Activated CD4-positive, alpha-beta T cell treated with anti-CD3 and anti-CD28 coated beads for 36 hours (primary cell): ENCODE measurements at regions of chr2 and their contacts with region 1.

Region 1: DNA sequence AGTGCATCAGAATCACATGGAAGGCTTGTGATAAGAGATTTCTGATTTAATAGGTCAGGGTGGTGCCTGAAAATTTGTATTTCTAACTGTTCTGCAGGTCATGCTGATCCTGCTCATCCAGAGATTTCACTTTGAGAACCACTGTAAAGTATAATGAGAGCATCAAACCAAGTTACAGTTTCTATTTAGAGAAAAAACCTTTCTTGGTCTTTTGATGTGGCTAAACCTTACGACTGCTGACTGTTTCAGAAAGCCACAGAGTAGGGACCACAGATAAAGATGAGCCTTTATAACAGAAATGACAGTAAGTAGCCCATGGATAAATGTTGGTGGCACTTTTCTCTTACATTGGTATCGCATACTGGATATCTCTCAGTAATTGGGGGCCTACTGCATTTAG is 109.4 kb upstream of the FANCL start:
- DNase-seq: no peak
- ATAC-seq: peak; percentile 90
- H3K4me3 Mint-ChIP-seq: no peak overlapping the region
- H3K27ac Mint-ChIP-seq: no peak overlapping the region
- H3K4me1 Mint-ChIP-seq: peaks cover 3% of the 10 kb centered on the region
- H3K27me3 Mint-ChIP-seq: peaks cover 43% of the 10 kb centered on the region

Region 2: GRCh38 chr2:58376592-58376991 is 26.1 kb after region 1 on chr2:
- CTCF ChIA-PET with region 1: no interaction called
- POLR2A ChIA-PET with region 1: no interaction called
- intact Hi-C with region 1: loop called (anchors 1 to 2 kb)
- DNase-seq: no peak
- ATAC-seq: peak; percentile 74
- H3K4me3 Mint-ChIP-seq: no peak overlapping the region
- H3K27ac Mint-ChIP-seq: no peak overlapping the region
- H3K4me1 Mint-ChIP-seq: peaks cover 13% of the 10 kb centered on the region
- H3K27me3 Mint-ChIP-seq: peaks cover 8% of the 10 kb centered on the region

Region 3: GRCh38 chr2:58571181-58571852 is 220.8 kb after region 1 on chr2:
- CTCF ChIA-PET with region 1: no interaction called
- POLR2A ChIA-PET with region 1: no interaction called
- intact Hi-C with region 1: no loop called
- DNase-seq: peak; percentile 22
- ATAC-seq: peak; percentile 66
- H3K4me3 Mint-ChIP-seq: no peak overlapping the region
- H3K27ac Mint-ChIP-seq: no peak overlapping the region
- H3K4me1 Mint-ChIP-seq: peaks cover 2% of the 10 kb centered on the region
- H3K27me3 Mint-ChIP-seq: no peaks in the 10 kb centered on the region